B cell (primary cell): ENCODE measurements at regions of chrX and their contacts with region 1.

Region 1: GRCh38 chrX:16882702-16883486 is 12.7 kb upstream of the RBBP7 start:
- DNase-seq: peak; percentile 75
- ATAC-seq: peak; percentile 79
- H3K4me3 ChIP-seq: peak overlapping the region; percentile 51 to 72 (median 63)
- H3K4me3 Mint-ChIP-seq: peak overlapping the region; percentile 88
- H3K27ac ChIP-seq: peak overlapping the region; percentile 29 to 64
- H3K27ac Mint-ChIP-seq: peak overlapping the region; percentile 88
- H3K4me1 ChIP-seq: peaks cover 14 to 20% of the 10 kb centered on the region in 2 donors
- H3K4me1 Mint-ChIP-seq: peaks cover 22% of the 10 kb centered on the region
- H3K27me3 ChIP-seq: peaks cover 0 to 3% (median 0%) of the 10 kb centered on the region in 4 experiments
- H3K27me3 Mint-ChIP-seq: no peaks in the 10 kb centered on the region
- CTCF ChIP-seq: peak; percentile 72

Region 2: GRCh38 chrX:16855363-16856075 is 27.4 kb before region 1 on chrX:
- CTCF ChIA-PET with region 1: interaction called, 10 read pairs
- POLR2A ChIA-PET with region 1: no interaction called
- intact Hi-C with region 1: no loop called
- DNase-seq: no peak
- ATAC-seq: no peak
- H3K4me3 ChIP-seq: no peak overlapping the region
- H3K4me3 Mint-ChIP-seq: no peak overlapping the region
- H3K27ac ChIP-seq: no peak overlapping the region
- H3K27ac Mint-ChIP-seq: no peak overlapping the region
- H3K4me1 ChIP-seq: no peaks in the 10 kb centered on the region
- H3K4me1 Mint-ChIP-seq: peaks cover 19% of the 10 kb centered on the region
- H3K27me3 ChIP-seq: no peaks in the 10 kb centered on the region
- H3K27me3 Mint-ChIP-seq: no peaks in the 10 kb centered on the region
- CTCF ChIP-seq: no peak

Region 3: DNA sequence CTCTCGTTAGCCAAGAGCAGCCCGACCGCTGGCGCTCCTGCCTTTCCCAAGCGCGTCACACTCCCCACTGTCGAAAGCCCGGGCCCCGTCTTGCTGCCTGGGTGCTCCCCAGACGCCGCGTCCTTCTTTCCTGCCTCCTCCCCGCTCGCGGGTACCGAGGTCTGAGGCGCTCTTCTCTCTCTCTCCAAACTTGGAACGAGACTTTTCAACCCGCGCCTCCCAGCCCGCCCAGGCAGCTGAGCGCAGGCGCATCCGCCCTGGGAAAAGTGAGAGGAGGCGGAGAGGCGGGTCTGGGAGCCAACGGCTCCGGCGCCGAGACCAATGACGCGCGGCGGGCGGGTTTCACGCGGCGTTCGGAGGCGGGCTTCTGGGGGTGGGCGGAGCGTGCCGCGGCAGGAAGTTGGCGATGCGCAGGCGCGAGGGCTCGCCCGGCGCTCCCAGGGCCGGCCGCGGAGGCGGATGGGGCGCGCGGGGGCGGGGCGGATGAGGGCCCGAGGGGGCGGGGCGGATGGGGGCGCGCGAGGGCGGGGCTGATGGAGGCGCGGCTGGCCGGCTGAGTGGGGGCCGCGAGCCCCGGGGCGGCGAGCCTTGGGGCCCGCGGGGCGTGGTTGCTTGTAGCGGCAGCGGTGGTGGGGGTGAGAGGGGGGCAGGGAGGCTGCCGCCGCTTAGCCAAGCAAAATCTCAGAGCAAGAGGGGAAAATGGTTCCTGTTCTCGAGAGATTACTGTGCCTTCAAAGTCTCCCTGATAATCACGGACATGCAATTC is 12.6 kb before region 1 on chrX and contains the start of gene RBBP7:
- CTCF ChIA-PET with region 1: interaction called, 102 read pairs
- POLR2A ChIA-PET with region 1: interaction called, 12 read pairs
- intact Hi-C with region 1: loop called (anchors 1 kb)
- DNase-seq: peak; percentile 92
- ATAC-seq: peak; percentile 80
- H3K4me3 ChIP-seq: peak within 1 kb of the TSS; percentile 41 to 94 (median 79)
- H3K4me3 Mint-ChIP-seq: peak within 1 kb of the TSS; percentile 93
- H3K27ac ChIP-seq: peak within 1 kb of the TSS; percentile 96 to 99
- H3K27ac Mint-ChIP-seq: peak within 1 kb of the TSS; percentile 98
- H3K4me1 ChIP-seq: peaks cover 26 to 33% of the 10 kb centered on the region in 2 donors
- H3K4me1 Mint-ChIP-seq: peaks cover 43% of the 10 kb centered on the region
- H3K27me3 ChIP-seq: peaks cover 0 to 10% (median 0%) of the 10 kb centered on the region in 4 experiments
- H3K27me3 Mint-ChIP-seq: no peaks in the 10 kb centered on the region
- CTCF ChIP-seq: no peak
- total RNA-seq, gene RBBP7: 106 and 110 TPM in 2 replicates

Region 4: GRCh38 chrX:16946361-16946964 is 63.6 kb after region 1 on chrX and contains the start of gene REPS2:
- CTCF ChIA-PET with region 1: interaction called, 4 read pairs
- POLR2A ChIA-PET with region 1: no interaction called
- intact Hi-C with region 1: loop called (anchors 2 kb)
- DNase-seq: peak; percentile 88
- ATAC-seq: peak; percentile 94
- H3K4me3 ChIP-seq: peak within 1 kb of the TSS in 4 of 5 experiments; percentile 51 to 64 (median 62)
- H3K4me3 Mint-ChIP-seq: peak within 1 kb of the TSS; percentile 87
- H3K27ac ChIP-seq: peak within 1 kb of the TSS in 1 of 2 donors; percentile 23
- H3K27ac Mint-ChIP-seq: peak within 1 kb of the TSS; percentile 50
- H3K4me1 ChIP-seq: peaks cover 8 to 17% of the 10 kb centered on the region in 2 donors
- H3K4me1 Mint-ChIP-seq: peaks cover 9% of the 10 kb centered on the region
- H3K27me3 ChIP-seq: no peaks in the 10 kb centered on the region
- H3K27me3 Mint-ChIP-seq: no peaks in the 10 kb centered on the region
- CTCF ChIP-seq: no peak
- total RNA-seq, gene REPS2: 4.9 and 9.4 TPM in 2 replicates

Region 5: GRCh38 chrX:17021851-17022604 is 139.1 kb after region 1 on chrX:
- CTCF ChIA-PET with region 1: no interaction called
- POLR2A ChIA-PET with region 1: no interaction called
- intact Hi-C with region 1: no loop called
- DNase-seq: no peak
- ATAC-seq: no peak
- H3K4me3 ChIP-seq: no peak overlapping the region
- H3K4me3 Mint-ChIP-seq: no peak overlapping the region
- H3K27ac ChIP-seq: no peak overlapping the region
- H3K27ac Mint-ChIP-seq: no peak overlapping the region
- H3K4me1 ChIP-seq: peaks cover 3 to 4% of the 10 kb centered on the region in 2 donors
- H3K4me1 Mint-ChIP-seq: peaks cover 10% of the 10 kb centered on the region
- H3K27me3 ChIP-seq: no peaks in the 10 kb centered on the region
- H3K27me3 Mint-ChIP-seq: no peaks in the 10 kb centered on the region
- CTCF ChIP-seq: no peak

Region 6: GRCh38 chrX:17046478-17047097 is 163.7 kb after region 1 on chrX:
- CTCF ChIA-PET with region 1: interaction called, 100 read pairs
- POLR2A ChIA-PET with region 1: no interaction called
- intact Hi-C with region 1: loop called (anchors 1 kb)
- DNase-seq: peak; percentile 61
- ATAC-seq: peak; percentile 45
- H3K4me3 ChIP-seq: no peak overlapping the region
- H3K4me3 Mint-ChIP-seq: no peak overlapping the region
- H3K27ac ChIP-seq: no peak overlapping the region
- H3K27ac Mint-ChIP-seq: no peak overlapping the region
- H3K4me1 ChIP-seq: peaks cover 0 to 2% of the 10 kb centered on the region in 2 donors
- H3K4me1 Mint-ChIP-seq: peaks cover 2% of the 10 kb centered on the region
- H3K27me3 ChIP-seq: no peaks in the 10 kb centered on the region
- H3K27me3 Mint-ChIP-seq: no peaks in the 10 kb centered on the region
- CTCF ChIP-seq: peak; percentile 68